Sciatic nerve (tissue), 2 donors: ENCODE measurements at regions of chr2 and their contacts with region 1.

Region 1: GRCh38 chr2:13604951-13605661 is 888.4 kb downstream of the TRIB2 start:
- DNase-seq: no peak
- ATAC-seq: no peak

Region 2: DNA sequence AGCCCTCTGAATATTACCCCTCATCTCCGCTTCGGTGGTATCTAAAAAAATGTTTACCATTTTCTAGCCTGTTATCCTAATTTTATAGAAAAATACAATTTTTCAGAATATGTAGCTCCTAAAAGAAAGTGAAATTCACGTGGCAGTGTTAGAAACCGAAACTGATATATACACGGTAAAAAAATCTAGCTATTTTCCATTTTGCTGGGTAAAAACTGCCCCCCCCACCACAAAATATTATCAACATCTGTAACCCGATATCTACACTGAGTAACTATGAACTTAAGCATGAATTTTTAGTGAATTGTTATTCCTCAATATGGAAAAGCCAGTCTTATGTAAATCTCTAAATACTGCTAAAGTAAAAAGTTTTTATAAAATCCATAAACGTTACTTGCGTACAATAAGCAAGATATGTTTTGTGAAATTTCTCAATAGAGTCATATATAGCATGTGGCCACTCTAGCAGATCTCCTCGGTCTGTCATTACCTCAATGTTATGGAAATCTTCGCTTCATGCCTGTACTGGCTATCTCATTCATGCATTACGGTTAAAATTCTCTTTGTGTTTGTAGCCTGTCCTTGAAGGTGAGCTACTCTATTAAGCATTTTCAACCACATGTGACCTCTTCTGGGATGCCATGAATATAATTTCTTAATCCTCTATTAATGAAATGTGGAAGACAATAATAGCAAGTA is 364.2 kb before region 1 on chr2:
- intact Hi-C with region 1: no loop called
- DNase-seq: no peak
- ATAC-seq: no peak

Region 3: DNA sequence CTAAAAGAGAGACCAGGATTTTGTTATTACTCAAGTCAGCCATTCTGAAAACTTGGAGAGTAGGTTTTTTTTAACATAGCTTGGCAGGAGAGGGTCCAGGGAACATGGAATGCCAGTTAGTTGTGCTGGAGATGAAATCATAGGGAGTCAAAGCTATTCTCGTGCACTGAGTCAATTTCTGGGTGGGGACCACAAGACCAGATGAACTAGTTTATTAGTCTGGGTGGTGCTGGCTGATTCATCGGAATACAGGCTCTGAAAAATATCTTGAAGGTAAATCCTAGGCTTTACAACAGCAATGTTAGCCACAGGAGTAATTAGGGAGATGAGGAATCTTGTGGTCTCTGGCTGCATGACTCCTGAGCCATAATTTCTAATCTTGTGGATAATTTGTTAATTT is 33.1 kb after region 1 on chr2:
- intact Hi-C with region 1: no loop called
- DNase-seq: no peak
- ATAC-seq: no peak

Region 4: GRCh38 chr2:14587139-14587538 is 982.0 kb after region 1 on chr2:
- intact Hi-C with region 1: loop called (anchors 5 kb)
- DNase-seq: no peak
- ATAC-seq: no peak

Region 5: GRCh38 chr2:14654835-14655282 is 1049.8 kb after region 1 on chr2:
- intact Hi-C with region 1: loop called (anchors 5 kb)
- DNase-seq: no peak
- ATAC-seq: no peak